ENCODE measurements at regions of chr10 and their contacts with region 1.

Region 1: GRCh38 chr10:50624866-50625692 is 1.3 kb upstream of the SGMS1 start:
- DNase-seq: peak; percentile 95

Region 2: GRCh38 chr10:50242777-50243176 is 382.3 kb before region 1 on chr10:
- intact Hi-C with region 1: no loop called
- DNase-seq: no peak

Region 3: GRCh38 chr10:50417886-50418830 is 206.9 kb before region 1 on chr10:
- intact Hi-C with region 1: loop called in 1 of 2 experiments (anchors 5 kb)
- DNase-seq: peak; percentile 94

Measured in posterior vena cava (tissue), 2 donors.